ENCODE measurements at regions of chr13 and their contacts with region 1.

Region 1: GRCh38 chr13:41061075-41061913 is at the start of gene WBP4:
- DNase-seq: peak; percentile 96
- H3K4me3 ChIP-seq: peak within 1 kb of the TSS; percentile 56 to 96 (median 71)
- H3K27ac ChIP-seq: peak within 1 kb of the TSS; percentile 93
- H3K4me1 ChIP-seq: peaks cover 49% of the 10 kb centered on the region
- H3K27me3 ChIP-seq: no peaks in the 10 kb centered on the region
- CTCF ChIP-seq: peak in 1 of 2 donors; percentile 25
- POLR2A ChIP-seq: peak; percentile 63
- total RNA-seq, gene WBP4: 14.4 and 14.8 TPM in 2 replicates

Region 2: DNA sequence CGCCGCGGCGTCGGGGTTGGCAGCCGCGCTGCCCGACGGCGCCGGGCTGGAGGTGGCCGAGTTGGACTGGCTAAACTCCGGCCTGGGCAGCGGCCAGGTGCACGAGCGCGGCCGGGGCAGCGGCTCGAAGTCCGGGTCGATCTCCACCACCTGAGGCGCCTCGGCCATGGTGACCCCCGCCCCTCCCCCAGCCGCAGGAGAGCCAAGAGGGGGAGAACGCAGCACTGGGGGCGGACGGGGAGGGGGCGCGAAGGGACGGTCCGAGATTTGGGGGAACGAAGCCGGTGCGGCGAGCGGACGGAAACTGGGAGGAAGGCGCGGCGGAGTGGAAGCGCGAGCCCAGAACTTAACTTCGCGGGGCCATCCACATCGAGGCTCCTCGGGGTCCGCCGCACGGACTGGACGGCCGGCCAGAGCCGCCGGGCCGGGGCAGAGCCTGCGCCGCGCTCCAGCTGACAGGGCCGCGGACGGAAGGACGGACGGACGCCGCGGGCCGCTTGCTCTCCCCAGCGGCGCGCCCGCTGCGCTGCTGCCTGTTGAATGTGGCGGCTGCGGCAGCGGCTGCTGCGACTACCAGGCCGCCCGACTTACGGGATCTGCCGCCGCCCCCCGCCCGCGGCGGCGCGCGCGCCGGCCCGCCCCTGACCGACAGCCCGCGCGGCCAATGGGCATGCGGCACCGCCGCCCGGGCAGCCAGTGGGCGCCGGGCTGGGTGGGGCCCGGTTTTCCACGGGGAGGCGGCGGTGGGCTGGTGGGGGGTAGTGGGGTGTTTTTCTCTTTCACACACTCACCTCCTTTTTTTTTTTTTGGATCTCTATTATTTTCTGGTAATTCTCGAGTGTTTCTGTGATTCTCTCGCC is 395.0 kb before region 1 on chr13 and contains the start of gene FOXO1:
- CTCF ChIA-PET with region 1: no interaction called
- POLR2A ChIA-PET with region 1: no interaction called
- dilution Hi-C with region 1: no loop called
- intact Hi-C with region 1: no loop called
- DNase-seq: peak; percentile 79
- H3K4me3 ChIP-seq: peak within 1 kb of the TSS; percentile 67 to 95 (median 86)
- H3K27ac ChIP-seq: peak within 1 kb of the TSS; percentile 81
- H3K4me1 ChIP-seq: peaks cover 24% of the 10 kb centered on the region
- H3K27me3 ChIP-seq: no peaks in the 10 kb centered on the region
- CTCF ChIP-seq: no peak
- POLR2A ChIP-seq: peak; percentile 97
- total RNA-seq, gene FOXO1: 47.6 and 48.5 TPM in 2 replicates

Region 3: DNA sequence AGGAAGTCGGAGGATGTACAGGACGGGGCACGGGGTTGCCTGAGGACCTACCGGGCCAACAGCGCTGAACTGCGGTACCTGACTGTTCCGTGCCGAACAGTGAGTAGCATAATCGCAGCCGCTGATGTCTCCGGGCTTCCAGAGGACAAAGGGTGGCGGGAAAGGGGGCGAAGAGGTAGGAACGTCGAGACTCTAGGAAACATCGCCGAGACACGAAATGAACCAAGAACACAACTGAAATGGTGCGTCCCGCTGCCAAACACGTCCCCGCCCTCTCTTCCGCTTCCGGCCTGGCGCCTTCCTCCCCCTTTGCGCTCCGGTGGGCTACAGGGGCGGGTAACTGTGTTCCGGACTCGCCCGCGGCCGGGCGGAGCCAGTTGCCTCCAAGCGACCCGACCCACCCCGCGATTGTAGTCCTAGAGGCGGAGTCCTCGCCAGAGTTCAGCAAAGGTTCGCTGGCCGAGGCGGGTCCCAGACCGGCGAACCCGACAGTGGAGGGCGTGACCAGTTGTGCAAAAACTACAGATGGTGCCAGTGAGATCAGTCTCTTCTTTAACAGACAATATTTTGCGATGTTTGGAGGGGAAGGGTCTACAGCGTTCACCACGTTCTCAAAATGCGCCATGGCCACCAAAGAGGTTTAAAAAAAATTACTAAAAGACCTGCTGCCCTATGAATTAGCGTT is 290.2 kb before region 1 on chr13 and contains the start of gene MRPS31:
- CTCF ChIA-PET with region 1: no interaction called
- POLR2A ChIA-PET with region 1: no interaction called
- dilution Hi-C with region 1: no loop called
- intact Hi-C with region 1: loop called (anchors 10 kb)
- DNase-seq: peak; percentile 93
- H3K4me3 ChIP-seq: peak within 1 kb of the TSS; percentile 71 to 91 (median 77)
- H3K27ac ChIP-seq: peak within 1 kb of the TSS; percentile 75
- H3K4me1 ChIP-seq: peaks cover 6% of the 10 kb centered on the region
- H3K27me3 ChIP-seq: no peaks in the 10 kb centered on the region
- CTCF ChIP-seq: no peak
- POLR2A ChIP-seq: peak; percentile 88
- total RNA-seq, gene MRPS31: 17.8 and 19.9 TPM in 2 replicates

Region 4: DNA sequence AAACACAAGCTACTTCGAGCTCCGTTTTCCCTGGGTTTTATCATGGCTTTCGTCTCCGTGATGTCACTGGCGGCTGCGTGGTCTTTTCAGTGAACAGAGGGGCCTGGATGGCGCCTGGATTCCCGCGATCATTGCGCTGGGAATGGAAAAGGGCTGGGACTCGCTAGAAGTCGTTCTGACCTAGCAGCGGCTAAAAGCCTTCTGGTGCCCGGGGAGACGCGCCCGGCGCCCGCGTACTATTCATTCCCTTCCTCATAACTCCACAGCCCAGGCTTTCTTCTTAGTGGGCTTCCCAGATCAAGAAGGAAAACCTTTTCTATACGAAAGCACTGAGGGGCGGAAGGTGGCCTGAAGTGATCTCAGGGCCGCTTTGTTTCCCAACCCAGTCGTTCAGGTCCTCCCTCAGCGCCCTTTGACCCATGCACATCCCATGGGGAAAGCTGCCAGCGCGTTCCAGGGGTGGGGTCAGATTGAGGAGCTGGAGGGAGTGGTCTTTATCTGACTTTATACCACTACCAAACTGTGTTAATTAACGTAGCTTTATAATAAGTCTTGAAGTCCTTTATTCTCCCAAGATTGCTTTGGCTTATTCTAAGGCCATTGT is 138.8 kb before region 1 on chr13:
- CTCF ChIA-PET with region 1: interaction called, 5 read pairs
- POLR2A ChIA-PET with region 1: no interaction called
- dilution Hi-C with region 1: no loop called
- intact Hi-C with region 1: loop called (anchors 2 kb)
- DNase-seq: no peak
- H3K4me3 ChIP-seq: no peak overlapping the region
- H3K27ac ChIP-seq: no peak overlapping the region
- H3K4me1 ChIP-seq: peaks cover 10% of the 10 kb centered on the region
- H3K27me3 ChIP-seq: no peaks in the 10 kb centered on the region
- CTCF ChIP-seq: no peak
- POLR2A ChIP-seq: no peak

Region 5: GRCh38 chr13:40982772-40983171 is 78.5 kb before region 1 on chr13:
- CTCF ChIA-PET with region 1: interaction called, 6 read pairs
- POLR2A ChIA-PET with region 1: interaction called, 3 read pairs
- dilution Hi-C with region 1: no loop called
- intact Hi-C with region 1: loop called (anchors 1 kb)
- DNase-seq: peak; percentile 95
- H3K4me3 ChIP-seq: peak overlapping the region; percentile 51 to 97 (median 91)
- H3K27ac ChIP-seq: peak overlapping the region; percentile 99
- H3K4me1 ChIP-seq: peaks cover 69% of the 10 kb centered on the region
- H3K27me3 ChIP-seq: no peaks in the 10 kb centered on the region
- CTCF ChIP-seq: no peak
- POLR2A ChIP-seq: peak; percentile 69

Region 6: GRCh38 chr13:41132512-41133152 is 71.3 kb after region 1 on chr13 and contains the start of gene KBTBD6:
- CTCF ChIA-PET with region 1: no interaction called
- POLR2A ChIA-PET with region 1: no interaction called
- dilution Hi-C with region 1: no loop called
- intact Hi-C with region 1: loop called (anchors 1 kb)
- DNase-seq: peak; percentile 99
- H3K4me3 ChIP-seq: peak within 1 kb of the TSS; percentile 53 to 93 (median 86)
- H3K27ac ChIP-seq: peak within 1 kb of the TSS; percentile 60
- H3K4me1 ChIP-seq: peaks cover 17% of the 10 kb centered on the region
- H3K27me3 ChIP-seq: no peaks in the 10 kb centered on the region
- CTCF ChIP-seq: no peak
- POLR2A ChIP-seq: peak; percentile 83
- total RNA-seq, gene KBTBD6: 6.4 and 6.6 TPM in 2 replicates

Region 7: DNA sequence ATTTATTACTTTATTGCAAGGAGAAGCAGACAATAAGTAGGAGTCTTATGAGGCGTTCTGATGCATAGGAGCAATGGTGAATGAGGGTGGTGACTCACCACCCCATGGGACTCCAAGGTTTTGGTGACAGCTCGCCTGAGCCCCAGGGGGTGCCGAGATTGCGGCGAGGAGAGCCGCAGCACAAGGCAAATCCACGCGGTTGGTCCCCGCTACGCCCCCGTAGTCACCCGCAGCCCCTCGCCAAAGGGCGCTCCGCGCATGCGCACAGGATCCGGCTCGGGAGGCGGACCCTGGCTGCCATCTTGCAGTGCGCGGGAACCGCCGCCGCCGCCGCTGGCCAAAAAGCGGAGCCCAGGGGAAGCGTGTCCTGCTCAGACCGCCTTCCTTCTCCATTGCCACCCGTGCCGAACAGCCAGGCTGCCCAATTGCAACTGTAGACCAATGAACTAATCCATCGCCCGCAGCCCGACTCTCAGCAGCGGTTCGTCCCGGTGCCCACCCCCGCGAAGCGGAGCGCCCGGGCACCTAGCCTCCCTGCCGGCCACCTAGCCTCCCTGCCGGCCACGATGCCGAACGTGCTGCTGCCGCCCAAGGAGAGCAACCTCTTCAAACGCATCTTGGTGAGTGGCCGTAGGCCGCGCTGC is 249.8 kb after region 1 on chr13 and contains the start of gene NAA16:
- CTCF ChIA-PET with region 1: no interaction called
- POLR2A ChIA-PET with region 1: no interaction called
- dilution Hi-C with region 1: no loop called
- intact Hi-C with region 1: loop called (anchors 5 kb)
- DNase-seq: peak; percentile 93
- H3K4me3 ChIP-seq: peak within 1 kb of the TSS; percentile 92 to 95 (median 94)
- H3K27ac ChIP-seq: peak within 1 kb of the TSS; percentile 72
- H3K4me1 ChIP-seq: peaks cover 36% of the 10 kb centered on the region
- H3K27me3 ChIP-seq: no peaks in the 10 kb centered on the region
- CTCF ChIP-seq: no peak
- POLR2A ChIP-seq: peak; percentile 84
- total RNA-seq, gene NAA16: 24.1 and 26.1 TPM in 2 replicates

Region 8: DNA sequence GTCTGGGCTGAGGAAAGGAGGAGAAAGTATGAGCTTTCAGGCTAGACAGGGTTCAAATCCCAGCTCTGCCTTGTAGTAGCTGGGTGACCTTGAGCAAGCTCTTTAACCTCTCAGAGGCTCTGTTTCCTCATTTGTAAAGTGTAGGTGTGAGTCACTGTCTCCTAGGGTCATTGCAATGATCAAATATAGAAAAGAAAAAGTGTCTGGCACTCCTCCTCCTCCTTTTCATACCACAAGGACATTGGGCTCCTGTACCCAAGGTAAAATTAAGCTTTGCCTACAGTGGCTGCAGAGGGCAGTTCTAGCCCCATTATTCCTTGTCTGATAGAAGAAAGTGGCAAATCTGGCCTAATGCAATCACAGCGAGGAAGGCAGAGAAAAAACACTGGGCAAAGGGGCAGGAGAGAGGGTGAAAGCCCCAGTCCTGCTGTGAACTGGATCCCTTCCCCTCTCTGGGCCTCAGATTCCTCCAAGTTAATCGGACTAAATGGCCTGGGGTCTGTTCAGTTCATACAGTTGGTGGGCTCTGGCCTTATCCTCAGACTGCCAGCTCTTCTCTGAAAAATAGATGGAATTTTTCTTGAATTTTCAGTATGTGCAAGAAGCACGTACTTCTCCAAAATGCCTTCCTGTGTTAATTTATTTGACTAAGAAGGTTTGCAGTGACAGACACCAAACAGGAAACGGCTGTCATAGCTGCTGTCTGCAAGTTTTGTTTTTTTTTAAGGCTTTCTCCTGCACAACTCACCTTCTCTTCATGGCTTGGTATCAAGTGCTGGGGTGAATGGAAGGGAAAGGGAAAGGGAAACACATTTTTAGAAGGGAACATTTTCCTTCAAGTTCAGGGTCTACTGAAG is 431.3 kb after region 1 on chr13:
- CTCF ChIA-PET with region 1: no interaction called
- POLR2A ChIA-PET with region 1: no interaction called
- dilution Hi-C with region 1: no loop called
- intact Hi-C with region 1: no loop called
- DNase-seq: peak; percentile 17
- H3K4me3 ChIP-seq: no peak overlapping the region
- H3K27ac ChIP-seq: no peak overlapping the region
- H3K4me1 ChIP-seq: peaks cover 4% of the 10 kb centered on the region
- H3K27me3 ChIP-seq: peaks cover 4 to 5% of the 10 kb centered on the region in 2 experiments
- CTCF ChIP-seq: no peak
- POLR2A ChIP-seq: no peak

Region 9: DNA sequence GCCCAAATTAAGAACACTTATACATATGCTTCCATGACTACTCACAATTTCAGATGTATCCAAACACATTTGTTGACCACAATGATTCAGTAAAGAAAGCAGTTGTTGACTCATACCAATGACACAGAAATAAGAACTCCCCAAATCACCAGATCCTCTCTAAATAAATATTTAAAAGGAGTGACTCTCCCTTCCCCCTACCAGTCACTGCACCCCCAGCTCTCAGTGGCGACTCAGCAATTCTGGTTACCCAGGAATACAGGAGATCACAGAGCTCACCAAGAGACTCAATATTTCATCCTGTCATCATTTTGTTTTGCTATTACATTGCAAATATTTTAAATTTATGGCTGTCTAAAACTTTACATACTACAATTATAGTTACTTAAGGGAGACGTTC is 527.6 kb after region 1 on chr13:
- CTCF ChIA-PET with region 1: no interaction called
- POLR2A ChIA-PET with region 1: no interaction called
- dilution Hi-C with region 1: no loop called
- intact Hi-C with region 1: no loop called
- DNase-seq: peak; percentile 37
- H3K4me3 ChIP-seq: no peak overlapping the region
- H3K27ac ChIP-seq: peak overlapping the region; percentile 36
- H3K4me1 ChIP-seq: peaks cover 3% of the 10 kb centered on the region
- H3K27me3 ChIP-seq: no peaks in the 10 kb centered on the region
- CTCF ChIP-seq: no peak
- POLR2A ChIP-seq: no peak

Region 10: GRCh38 chr13:41960639-41961465 is 899.6 kb after region 1 on chr13 and contains the start of gene VWA8:
- CTCF ChIA-PET with region 1: no interaction called
- POLR2A ChIA-PET with region 1: no interaction called
- dilution Hi-C with region 1: no loop called
- intact Hi-C with region 1: loop called (anchors 5 kb)
- DNase-seq: peak; percentile 60
- H3K4me3 ChIP-seq: peak within 1 kb of the TSS; percentile 52 to 61 (median 54)
- H3K27ac ChIP-seq: peak within 1 kb of the TSS; percentile 2
- H3K4me1 ChIP-seq: peaks cover 8% of the 10 kb centered on the region
- H3K27me3 ChIP-seq: no peaks in the 10 kb centered on the region
- CTCF ChIP-seq: no peak
- POLR2A ChIP-seq: no peak
- total RNA-seq, gene VWA8: 11.3 and 12.7 TPM in 2 replicates